ENCODE measurements at regions of chr10 and their contacts with region 1.

Region 1: DNA sequence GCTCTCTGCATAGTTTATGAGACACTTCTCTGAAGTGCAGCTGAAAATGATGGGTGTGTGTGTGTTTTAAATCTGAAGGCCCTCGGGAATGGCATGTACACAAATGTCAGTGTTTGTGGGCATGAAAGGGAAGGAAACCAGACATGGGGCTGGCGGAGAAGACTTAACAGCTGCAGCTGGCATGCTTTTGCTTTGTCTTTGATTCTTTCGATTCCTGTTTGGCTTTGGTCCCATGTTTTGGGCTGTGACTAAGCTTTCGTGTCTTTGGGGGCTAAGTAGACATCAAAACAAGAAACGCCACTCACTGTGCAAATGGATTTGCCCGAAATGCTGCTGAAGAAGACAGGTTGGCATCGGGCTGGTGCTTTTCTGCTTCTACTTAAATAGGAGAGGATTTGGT is 179.3 kb downstream of the PFKFB3 start:
- DNase-seq: peak in 2 of 7 donors; percentile 43 to 50
- H3K4me3 ChIP-seq: no peak overlapping the region
- H3K27ac ChIP-seq: peak overlapping the region in 3 of 5 donors; percentile 43 to 85 (median 61)
- H3K4me1 ChIP-seq: peaks cover 0 to 6% of the 10 kb centered on the region in 2 donors
- H3K27me3 ChIP-seq: no peaks in the 10 kb centered on the region
- CTCF ChIP-seq: no peak
- POLR2A ChIP-seq: no peak

Region 2: DNA sequence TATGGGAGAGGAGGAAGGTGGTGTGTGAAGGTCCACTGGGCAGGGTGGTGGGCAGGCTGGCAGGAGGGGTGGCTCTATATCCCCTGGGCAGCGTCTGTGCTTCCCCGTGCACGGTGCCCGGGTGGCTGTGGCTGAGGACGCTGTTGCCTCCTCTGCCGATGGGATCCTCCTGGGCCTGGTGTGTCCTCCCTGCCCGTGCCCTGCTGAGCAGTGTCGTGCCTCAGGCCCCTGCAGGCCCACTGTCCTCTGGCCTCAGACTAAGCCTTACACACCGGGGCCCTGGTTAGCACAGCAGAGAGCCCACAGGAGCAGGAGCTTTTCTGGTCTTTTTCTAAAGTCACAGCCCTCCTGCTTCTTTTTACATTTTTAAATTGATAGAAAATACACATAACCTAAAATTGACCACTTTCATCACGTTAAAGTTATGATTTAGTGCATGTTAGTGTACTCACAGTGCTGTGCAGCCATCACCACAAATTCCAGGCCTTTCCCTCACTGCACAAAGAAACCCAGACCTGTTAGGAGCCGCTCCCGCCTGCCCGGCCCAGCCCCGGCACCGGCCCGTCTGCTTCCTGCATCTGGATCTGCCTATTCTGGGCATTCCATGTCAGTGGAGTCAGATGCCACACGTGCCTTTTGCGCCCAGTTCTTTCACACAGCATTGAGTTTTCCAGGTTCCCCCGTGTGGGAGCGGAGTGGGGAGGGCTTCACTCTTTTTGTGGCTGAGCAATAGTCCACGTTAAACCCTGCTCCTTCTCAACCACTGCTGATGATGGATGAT is 159.9 kb before region 1 on chr10:
- intact Hi-C with region 1: loop called in 1 of 2 experiments (anchors 10 kb)
- DNase-seq: no peak
- H3K4me3 ChIP-seq: no peak overlapping the region
- H3K27ac ChIP-seq: no peak overlapping the region
- H3K4me1 ChIP-seq: no peaks in the 10 kb centered on the region
- H3K27me3 ChIP-seq: no peaks in the 10 kb centered on the region
- CTCF ChIP-seq: no peak
- POLR2A ChIP-seq: no peak

Measured in adrenal gland (tissue), 19 donors.